MCF 10A (cell line): ENCODE measurements at regions of chr2 and their contacts with region 1.

Region 1: DNA sequence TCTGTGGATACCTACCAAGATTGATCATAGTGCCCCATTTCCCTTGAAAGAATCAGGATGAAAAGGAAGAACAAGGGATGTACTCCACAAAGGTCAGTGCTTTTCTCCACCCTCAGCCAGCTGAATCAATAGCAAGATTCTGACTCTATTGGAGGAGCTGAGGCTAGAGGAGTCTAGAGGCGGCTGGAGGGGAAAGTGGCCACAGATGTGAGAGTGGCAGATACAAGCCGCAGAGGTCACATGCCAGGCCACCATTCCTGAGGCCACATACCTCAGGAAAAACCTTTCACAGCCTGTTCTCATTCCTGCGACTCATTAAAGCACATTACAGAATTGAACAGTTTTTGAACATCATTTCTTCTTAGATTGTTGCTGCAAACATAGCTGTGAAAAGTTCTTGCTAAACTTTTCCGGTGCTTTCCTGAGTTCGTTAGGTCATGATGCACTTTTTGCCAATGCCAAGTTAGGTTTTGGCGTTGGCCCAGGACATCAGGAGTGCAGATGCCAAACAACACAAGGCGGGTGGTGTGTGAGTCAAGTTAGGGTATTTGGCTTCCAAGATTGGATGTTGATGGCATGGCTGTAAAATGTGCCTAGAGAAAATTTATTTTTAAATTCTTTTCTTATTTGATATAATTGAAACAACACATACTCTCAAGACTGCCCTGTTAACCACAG is 160.7 kb upstream of the SP5 start:
- DNase-seq: peak; percentile 99
- H3K4me3 Mint-ChIP-seq: peak overlapping the region; percentile 12
- H3K27ac Mint-ChIP-seq: peak overlapping the region; percentile 86
- H3K4me1 Mint-ChIP-seq: peaks cover 12% of the 10 kb centered on the region
- H3K27me3 Mint-ChIP-seq: no peaks in the 10 kb centered on the region
- CTCF ChIP-seq: no peak

Region 2: GRCh38 chr2:170530284-170530745 is 24.1 kb before region 1 on chr2:
- CTCF ChIA-PET with region 1: interaction called, 3 read pairs
- POLR2A ChIA-PET with region 1: interaction called, 10 read pairs
- intact Hi-C with region 1: no loop called
- DNase-seq: peak; percentile 81
- H3K4me3 Mint-ChIP-seq: no peak overlapping the region
- H3K27ac Mint-ChIP-seq: peak overlapping the region; percentile 29
- H3K4me1 Mint-ChIP-seq: peaks cover 19% of the 10 kb centered on the region
- H3K27me3 Mint-ChIP-seq: no peaks in the 10 kb centered on the region
- CTCF ChIP-seq: no peak

Region 3: DNA sequence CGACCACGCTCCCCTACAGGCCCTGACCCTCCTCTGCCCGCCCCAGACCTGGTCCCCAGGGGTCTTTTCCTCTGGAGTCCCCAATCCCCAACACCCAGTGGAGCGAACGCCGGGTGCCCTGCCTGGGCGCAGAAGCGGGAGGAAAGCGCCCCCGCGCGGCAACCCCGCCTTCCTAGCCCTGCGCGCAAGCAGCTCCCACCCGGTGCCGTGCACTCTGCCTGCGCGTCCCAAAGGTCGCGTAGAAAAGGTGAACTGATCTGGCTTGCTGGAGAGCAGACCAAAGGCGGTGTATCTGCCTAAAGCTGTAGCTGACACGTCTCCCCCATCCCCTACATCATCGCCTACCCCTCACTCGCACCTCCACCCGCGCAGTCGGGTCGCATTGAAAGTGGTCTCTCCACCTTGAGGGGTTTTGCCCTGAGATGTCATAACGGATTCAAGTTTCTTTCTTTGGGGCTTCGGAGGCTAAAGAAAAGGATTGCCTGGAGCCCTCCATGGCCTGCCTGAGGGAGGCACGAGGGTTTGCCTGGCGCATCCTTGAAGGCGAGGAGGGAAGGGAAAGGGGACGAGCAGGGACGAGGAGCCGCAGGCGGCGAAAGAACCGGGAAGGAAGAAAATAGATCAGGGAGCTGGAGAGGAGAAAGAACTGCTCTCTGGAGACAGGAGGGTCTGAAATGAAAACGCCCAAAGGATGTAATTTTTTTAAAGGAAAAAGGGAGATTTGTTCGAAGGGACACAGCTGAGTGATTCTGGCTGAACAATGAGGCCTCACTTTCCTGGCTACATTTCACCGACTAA is 268.1 kb after region 1 on chr2:
- CTCF ChIA-PET with region 1: no interaction called
- POLR2A ChIA-PET with region 1: no interaction called
- intact Hi-C with region 1: no loop called
- DNase-seq: no peak
- H3K4me3 Mint-ChIP-seq: no peak overlapping the region
- H3K27ac Mint-ChIP-seq: no peak overlapping the region
- H3K4me1 Mint-ChIP-seq: peaks cover 6% of the 10 kb centered on the region
- H3K27me3 Mint-ChIP-seq: peaks cover 78% of the 10 kb centered on the region
- CTCF ChIP-seq: no peak